AG04450 (cell line): ENCODE measurements at regions of chr1 and their contacts with region 1.

Region 1: GRCh38 chr1:37859507-37860345 is at the start of gene MTF1:
- DNase-seq: peak; percentile 87
- H3K4me3 ChIP-seq: peak within 1 kb of the TSS; percentile 100
- H3K27ac ChIP-seq: peak within 1 kb of the TSS; percentile 86
- H3K27me3 ChIP-seq: no peaks in the 10 kb centered on the region
- CTCF ChIP-seq: peak; percentile 89
- polyA plus RNA-seq, gene MTF1: 6.8 and 8.6 TPM in 2 replicates

Region 2: GRCh38 chr1:37544530-37544929 is 315.2 kb before region 1 on chr1:
- CTCF ChIA-PET with region 1: no interaction called
- POLR2A ChIA-PET with region 1: no interaction called
- DNase-seq: no peak
- H3K4me3 ChIP-seq: no peak overlapping the region
- H3K27ac ChIP-seq: no peak overlapping the region
- H3K27me3 ChIP-seq: no peaks in the 10 kb centered on the region
- CTCF ChIP-seq: no peak

Region 3: GRCh38 chr1:37817481-37817880 is 42.2 kb before region 1 on chr1:
- CTCF ChIA-PET with region 1: interaction called, 19 read pairs
- POLR2A ChIA-PET with region 1: no interaction called
- DNase-seq: no peak
- H3K4me3 ChIP-seq: no peak overlapping the region
- H3K27ac ChIP-seq: no peak overlapping the region
- H3K27me3 ChIP-seq: no peaks in the 10 kb centered on the region
- CTCF ChIP-seq: no peak

Region 4: DNA sequence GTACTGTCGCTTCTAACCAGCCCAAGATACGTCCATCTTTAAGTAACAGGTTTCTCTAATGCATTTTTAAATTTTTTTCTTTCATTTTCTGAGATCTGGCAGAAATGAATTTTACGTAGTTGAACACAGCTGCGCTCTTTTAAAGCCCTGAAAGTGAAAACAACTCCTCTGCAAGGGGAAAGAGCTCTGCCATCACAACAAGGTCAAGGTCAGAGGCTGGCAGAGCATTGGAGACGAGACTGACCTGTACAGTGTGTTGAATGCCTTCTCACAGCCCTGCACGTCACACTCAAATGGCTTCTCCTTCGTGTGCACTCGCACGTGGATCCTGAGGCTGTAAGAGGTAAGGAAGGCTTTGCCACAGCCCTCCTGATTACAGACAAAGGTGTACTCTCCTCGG is 20.1 kb before region 1 on chr1:
- CTCF ChIA-PET with region 1: interaction called, 52 read pairs
- POLR2A ChIA-PET with region 1: no interaction called
- DNase-seq: no peak
- H3K4me3 ChIP-seq: no peak overlapping the region
- H3K27ac ChIP-seq: no peak overlapping the region
- H3K27me3 ChIP-seq: no peaks in the 10 kb centered on the region
- CTCF ChIP-seq: no peak

Region 5: GRCh38 chr1:37883671-37884070 is 23.9 kb after region 1 on chr1:
- CTCF ChIA-PET with region 1: interaction called, 13 read pairs
- POLR2A ChIA-PET with region 1: no interaction called
- DNase-seq: no peak
- H3K4me3 ChIP-seq: no peak overlapping the region
- H3K27ac ChIP-seq: no peak overlapping the region
- H3K27me3 ChIP-seq: no peaks in the 10 kb centered on the region
- CTCF ChIP-seq: no peak

Region 6: DNA sequence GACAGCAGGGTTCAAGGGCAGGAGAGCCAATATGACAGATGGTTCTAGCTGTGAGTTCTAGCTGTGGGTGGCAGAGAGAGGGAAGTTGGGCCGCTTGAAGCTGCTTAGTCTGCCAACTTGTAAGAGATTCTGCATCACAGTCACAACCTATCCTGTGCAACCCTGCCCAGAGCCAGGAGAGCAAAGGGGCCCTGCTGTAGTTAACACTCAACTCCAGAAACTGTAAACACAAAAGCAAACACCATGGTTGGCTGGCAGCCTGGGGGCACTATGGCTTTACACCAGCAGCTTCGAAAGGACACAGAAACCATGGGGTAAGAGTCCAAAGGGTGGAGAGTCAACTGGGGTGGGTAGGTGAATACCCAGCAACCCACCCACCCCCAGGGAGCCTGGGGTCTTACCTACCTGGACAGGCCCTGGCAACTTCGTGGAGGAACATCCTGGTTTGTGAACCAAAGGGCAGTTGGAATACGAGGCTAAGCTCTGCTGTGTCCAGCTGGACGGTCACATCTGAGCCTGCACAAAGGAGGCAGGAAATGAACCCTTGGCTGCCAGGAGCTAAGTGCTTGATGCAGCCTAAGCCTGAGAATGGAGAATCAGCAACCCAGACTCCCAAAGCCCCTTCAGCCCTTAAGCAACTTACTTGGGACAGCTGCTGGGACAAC is 80.7 kb after region 1 on chr1:
- CTCF ChIA-PET with region 1: interaction called, 14 read pairs
- POLR2A ChIA-PET with region 1: no interaction called
- DNase-seq: no peak
- H3K4me3 ChIP-seq: no peak overlapping the region
- H3K27ac ChIP-seq: no peak overlapping the region
- H3K27me3 ChIP-seq: no peaks in the 10 kb centered on the region
- CTCF ChIP-seq: no peak

Region 7: GRCh38 chr1:37989361-37989930 is 129.7 kb after region 1 on chr1:
- CTCF ChIA-PET with region 1: interaction called, 11 read pairs
- POLR2A ChIA-PET with region 1: no interaction called
- DNase-seq: no peak
- H3K4me3 ChIP-seq: peak overlapping the region; percentile 98
- H3K27ac ChIP-seq: peak overlapping the region; percentile 70
- H3K27me3 ChIP-seq: no peaks in the 10 kb centered on the region
- CTCF ChIP-seq: no peak